ENCODE measurements at regions of chr11 and their contacts with region 1.

Region 1: DNA sequence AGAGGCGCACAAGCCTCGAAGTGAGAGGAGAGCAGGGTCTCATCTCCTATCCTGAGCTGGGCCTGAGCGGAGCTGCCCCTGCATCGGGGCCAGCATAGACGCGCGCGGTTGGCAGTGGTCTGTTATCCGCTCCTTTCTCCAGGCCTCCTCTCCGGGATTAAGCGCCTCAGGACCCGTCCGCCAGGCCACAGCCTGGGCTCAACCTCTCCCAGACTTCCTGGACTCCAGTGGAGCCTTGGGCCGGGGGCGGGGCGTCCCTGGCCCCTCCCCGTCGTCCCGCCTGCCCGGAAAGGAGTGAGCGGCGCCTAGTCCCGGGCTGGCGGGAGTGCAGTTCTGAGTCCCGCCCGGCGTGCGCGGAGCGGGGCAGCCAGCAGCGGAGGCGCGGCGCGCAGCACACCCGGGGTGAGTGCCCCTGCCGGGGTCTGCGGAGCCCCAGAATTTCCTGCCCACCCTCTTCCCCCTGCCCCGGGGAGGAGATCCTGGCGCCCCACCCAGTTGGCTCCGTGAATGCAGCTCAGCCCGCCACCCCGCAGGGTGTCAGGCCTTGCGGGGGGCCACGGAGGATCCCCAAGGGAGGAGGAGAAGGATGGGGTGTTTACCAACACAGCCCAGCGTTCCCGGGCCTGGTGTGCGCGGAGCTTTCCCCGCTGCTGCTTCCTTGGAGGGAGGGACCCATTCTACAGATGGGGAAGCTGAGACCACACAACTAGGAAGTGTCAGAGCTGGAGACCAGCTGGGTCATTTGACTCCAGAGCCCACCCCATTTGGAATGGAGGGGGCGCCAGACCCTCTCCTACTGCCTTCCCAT is at the start of gene TCIRG1:
- DNase-seq: peak; percentile 96
- H3K4me3 ChIP-seq: peak within 1 kb of the TSS; percentile 67 to 84 (median 75)
- H3K27ac ChIP-seq: peak within 1 kb of the TSS; percentile 86 to 91 (median 90)
- H3K4me1 ChIP-seq: peaks cover 0 to 56% (median 44%) of the 10 kb centered on the region in 4 donors
- H3K27me3 ChIP-seq: no peaks in the 10 kb centered on the region
- CTCF ChIP-seq: peak in 2 of 4 experiments; percentile 27 to 38
- EP300 ChIP-seq: no peak
- POLR2A ChIP-seq: peak; percentile 95 to 97
- total RNA-seq, gene TCIRG1: 69.9 to 147 (median 81.9) TPM

Region 2: DNA sequence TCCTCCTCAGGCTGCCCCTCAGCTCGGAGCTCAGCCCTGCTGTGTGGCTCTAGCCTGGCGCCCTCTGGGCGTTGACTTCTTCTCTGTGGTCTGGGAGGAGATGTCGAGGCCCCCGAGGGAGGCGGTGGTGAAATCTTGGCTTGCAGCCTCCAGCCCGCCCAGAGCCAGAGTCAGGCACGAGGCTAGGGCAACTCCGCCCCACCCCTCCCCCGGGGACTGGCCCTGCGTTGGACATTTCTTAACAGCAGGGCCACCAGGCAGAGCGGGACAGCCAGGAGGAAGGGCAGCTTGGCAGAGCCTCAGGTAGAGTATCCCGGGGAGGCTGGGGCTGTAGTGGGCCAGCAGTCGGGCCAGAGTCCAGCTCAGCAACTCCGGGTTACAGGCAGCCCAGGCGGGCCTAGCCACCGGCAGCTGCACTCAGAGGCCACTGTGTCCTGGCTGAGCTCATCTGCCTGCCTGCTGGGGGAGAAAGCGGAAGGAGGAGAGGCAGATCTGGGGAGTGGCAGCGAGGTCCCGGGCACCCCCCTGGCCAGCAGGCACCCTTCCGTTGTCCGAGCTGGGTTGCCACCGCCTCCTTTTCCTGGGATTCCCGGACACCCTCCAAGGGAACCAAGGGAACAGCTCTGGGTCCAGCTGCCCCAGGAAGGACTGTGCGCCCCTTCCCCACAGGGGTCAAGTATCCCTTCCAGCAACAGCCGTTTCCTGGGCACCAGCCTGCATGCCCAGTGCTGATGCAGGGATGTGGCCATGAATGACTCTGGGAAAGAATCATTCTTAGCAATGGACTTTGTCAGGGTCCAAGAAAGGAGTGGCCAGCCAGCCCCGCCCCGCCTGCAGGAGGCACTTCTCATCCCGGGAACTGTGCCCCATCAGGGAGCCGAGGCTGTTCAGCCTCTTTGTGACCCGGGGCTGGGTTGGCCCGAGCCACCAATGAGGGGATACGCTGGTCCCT is 28.6 kb before region 1 on chr11 and contains the start of gene ALDH3B1:
- intact Hi-C with region 1: loop called (anchors 2 kb)
- DNase-seq: peak; percentile 96
- H3K4me3 ChIP-seq: peak within 1 kb of the TSS; percentile 19 to 50 (median 41)
- H3K27ac ChIP-seq: peak within 1 kb of the TSS; percentile 87 to 93 (median 90)
- H3K4me1 ChIP-seq: peaks cover 0 to 67% (median 54%) of the 10 kb centered on the region in 4 donors
- H3K27me3 ChIP-seq: no peaks in the 10 kb centered on the region
- CTCF ChIP-seq: no peak
- EP300 ChIP-seq: no peak
- POLR2A ChIP-seq: peak; percentile 15 to 38
- total RNA-seq, gene ALDH3B1: 9.4 to 14.7 (median 11.7) TPM

Region 3: DNA sequence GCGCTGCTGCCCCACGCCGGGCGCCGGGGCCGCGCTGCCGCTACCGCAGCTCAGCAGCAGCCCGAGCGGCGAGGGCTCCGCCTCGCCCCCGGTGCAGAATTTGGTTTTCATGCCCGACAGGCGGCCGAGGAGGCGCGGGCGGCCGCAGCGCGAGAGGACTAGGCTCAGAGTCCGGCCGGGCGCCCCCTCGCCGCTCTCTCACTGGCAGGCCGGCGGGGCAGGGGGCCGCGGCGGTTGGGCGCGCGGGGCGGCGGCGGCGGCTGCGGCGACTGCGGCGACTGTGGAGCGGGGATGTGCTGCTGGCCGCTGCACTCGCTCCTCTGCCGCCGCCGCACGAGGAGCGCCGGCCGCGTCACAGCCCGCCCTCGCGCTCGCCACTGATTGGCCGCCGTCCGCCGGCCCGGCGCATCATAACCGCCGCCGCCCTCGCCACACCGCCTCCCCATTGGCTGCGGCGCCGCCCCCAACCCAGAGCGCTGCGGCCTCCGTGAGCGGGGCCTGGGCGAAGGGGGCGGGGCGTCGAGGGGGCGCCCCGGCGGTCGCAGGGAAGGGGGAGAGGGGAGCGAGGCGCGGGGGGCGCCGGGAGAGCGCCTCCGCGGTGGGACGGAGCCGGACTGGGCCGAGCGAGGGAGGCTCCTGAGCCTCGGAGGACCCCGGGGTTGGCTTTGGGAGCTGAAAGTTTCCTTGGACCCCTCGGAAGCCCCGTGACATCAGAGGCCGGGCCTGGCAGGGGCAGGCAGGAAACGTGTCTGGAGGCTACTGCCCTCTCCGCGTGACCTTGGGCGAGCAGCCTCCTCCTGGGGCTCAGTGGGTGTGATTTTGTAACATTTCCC is 82.4 kb after region 1 on chr11 and contains the start of gene CHKA:
- intact Hi-C with region 1: loop called (anchors 2 kb)
- DNase-seq: peak; percentile 97
- H3K4me3 ChIP-seq: peak within 1 kb of the TSS; percentile 49 to 87 (median 72)
- H3K27ac ChIP-seq: peak within 1 kb of the TSS; percentile 99 to 100 (median 99)
- H3K4me1 ChIP-seq: peaks cover 0 to 55% (median 46%) of the 10 kb centered on the region in 4 donors
- H3K27me3 ChIP-seq: no peaks in the 10 kb centered on the region
- CTCF ChIP-seq: no peak
- EP300 ChIP-seq: peak in 2 of 4 donors; percentile 38 to 43
- POLR2A ChIP-seq: peak; percentile 70 to 84
- total RNA-seq, gene CHKA: 16.4 to 39.1 (median 27.9) TPM

Region 4: DNA sequence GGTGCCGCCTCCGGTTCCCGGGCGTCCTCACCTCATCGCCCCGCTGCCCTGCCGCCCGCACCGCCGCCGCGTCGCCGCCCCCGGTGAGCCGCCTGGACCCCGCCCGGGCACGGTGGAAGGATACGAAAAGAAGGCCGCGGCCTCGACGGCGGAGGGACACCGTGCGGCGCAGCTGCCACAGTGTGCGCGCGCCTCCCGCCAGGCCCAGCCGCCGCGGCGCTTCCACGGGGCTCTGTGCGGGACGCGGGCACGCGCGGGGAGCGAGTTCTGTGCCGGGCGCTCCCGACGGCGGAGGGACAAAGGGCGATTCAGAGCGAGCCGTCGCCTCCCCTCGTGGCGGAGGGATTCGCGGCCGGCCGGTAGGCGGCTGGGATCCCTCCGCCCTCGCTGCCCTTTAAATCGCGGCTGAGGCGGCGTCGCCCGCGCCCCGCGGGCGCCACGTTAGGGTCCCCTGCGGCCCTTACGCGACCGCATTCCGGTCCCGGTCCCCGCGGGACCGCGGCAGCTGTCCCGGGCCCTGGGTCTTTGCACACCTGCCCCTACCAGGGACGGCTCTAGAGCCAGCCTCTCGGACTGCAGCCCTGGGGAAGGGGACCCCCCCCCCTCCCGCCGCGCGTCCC is 174.7 kb after region 1 on chr11:
- intact Hi-C with region 1: loop called (anchors 2 kb)
- DNase-seq: peak; percentile 96
- H3K4me3 ChIP-seq: peak overlapping the region; percentile 64 to 94 (median 76)
- H3K27ac ChIP-seq: peak overlapping the region; percentile 97 to 99 (median 98)
- H3K4me1 ChIP-seq: peaks cover 0 to 44% (median 41%) of the 10 kb centered on the region in 4 donors
- H3K27me3 ChIP-seq: no peaks in the 10 kb centered on the region
- CTCF ChIP-seq: peak in 1 of 4 experiments; percentile 4
- EP300 ChIP-seq: no peak
- POLR2A ChIP-seq: peak; percentile 92 to 94

Measured in sigmoid colon (tissue), 7 donors.